ENCODE measurements at regions of chr7 and their contacts with region 1.

Region 1: GRCh38 chr7:25098096-25099046 is 26.7 kb downstream of the CYCS start:
- DNase-seq: no peak
- ATAC-seq: peak; percentile 79
- H3K4me3 ChIP-seq: no peak overlapping the region
- H3K27ac ChIP-seq: no peak overlapping the region
- H3K4me1 ChIP-seq: peaks cover 2% of the 10 kb centered on the region
- H3K27me3 ChIP-seq: no peaks in the 10 kb centered on the region
- CTCF ChIP-seq: peak; percentile 90 to 95 (median 91)
- EP300 ChIP-seq: no peak
- POLR2A ChIP-seq: no peak
- RAD21 ChIP-seq: peak; percentile 90

Region 2: DNA sequence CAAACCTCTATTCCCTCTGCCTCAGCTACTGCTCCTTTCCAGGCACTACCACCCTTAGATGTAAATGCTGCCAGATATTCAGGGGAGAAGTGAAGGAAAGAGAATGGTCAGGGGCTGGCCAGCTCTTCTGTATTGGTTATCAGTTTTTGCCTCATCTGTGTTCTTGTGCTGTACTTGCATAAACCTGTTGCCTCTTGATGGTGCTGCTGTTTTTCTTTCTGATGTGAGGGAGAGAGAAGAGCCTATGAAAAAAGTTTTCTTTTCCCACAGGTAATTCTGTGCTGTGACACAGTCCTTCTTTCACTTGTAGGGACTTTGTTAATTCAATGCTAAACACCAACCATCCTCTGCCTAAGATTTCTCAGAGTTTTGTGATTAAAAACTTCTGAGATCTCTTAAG is 1330.9 kb before region 1 on chr7:
- CTCF ChIA-PET with region 1: no interaction called
- POLR2A ChIA-PET with region 1: no interaction called
- RAD21 ChIA-PET with region 1: no interaction called
- SMC1A ChIA-PET with region 1: no interaction called
- in situ Hi-C with region 1: no loop called
- intact Hi-C with region 1: no loop called
- DNase-seq: no peak
- ATAC-seq: no peak
- H3K4me3 ChIP-seq: no peak overlapping the region
- H3K27ac ChIP-seq: no peak overlapping the region
- H3K4me1 ChIP-seq: no peaks in the 10 kb centered on the region
- H3K27me3 ChIP-seq: no peaks in the 10 kb centered on the region
- CTCF ChIP-seq: no peak
- EP300 ChIP-seq: no peak
- POLR2A ChIP-seq: no peak
- RAD21 ChIP-seq: no peak

Region 3: GRCh38 chr7:25060487-25061055 is 37.8 kb before region 1 on chr7:
- CTCF ChIA-PET with region 1: interaction called, 10 read pairs
- POLR2A ChIA-PET with region 1: no interaction called
- RAD21 ChIA-PET with region 1: interaction called, 4 read pairs
- SMC1A ChIA-PET with region 1: interaction called, 5 read pairs
- in situ Hi-C with region 1: no loop called
- intact Hi-C with region 1: no loop called
- DNase-seq: no peak
- ATAC-seq: no peak
- H3K4me3 ChIP-seq: no peak overlapping the region
- H3K27ac ChIP-seq: no peak overlapping the region
- H3K4me1 ChIP-seq: no peaks in the 10 kb centered on the region
- H3K27me3 ChIP-seq: no peaks in the 10 kb centered on the region; a peak in 1 of 4 replicates
- CTCF ChIP-seq: no peak
- EP300 ChIP-seq: no peak
- POLR2A ChIP-seq: no peak
- RAD21 ChIP-seq: no peak

Region 4: GRCh38 chr7:25117226-25118047 is 19.1 kb after region 1 on chr7:
- CTCF ChIA-PET with region 1: interaction called, 46 read pairs
- POLR2A ChIA-PET with region 1: interaction called, 4 read pairs
- RAD21 ChIA-PET with region 1: interaction called, 9 read pairs
- SMC1A ChIA-PET with region 1: interaction called, 31 read pairs
- in situ Hi-C with region 1: no loop called
- intact Hi-C with region 1: no loop called
- DNase-seq: peak; percentile 91
- ATAC-seq: peak; percentile 87
- H3K4me3 ChIP-seq: peak overlapping the region; percentile 45
- H3K27ac ChIP-seq: peak overlapping the region; percentile 90
- H3K4me1 ChIP-seq: peaks cover 43% of the 10 kb centered on the region
- H3K27me3 ChIP-seq: no peaks in the 10 kb centered on the region
- CTCF ChIP-seq: no peak
- EP300 ChIP-seq: peak; percentile 79 to 92
- POLR2A ChIP-seq: peak; percentile 57; the same call in 1 of the 2 replicates
- RAD21 ChIP-seq: no peak

Region 5: DNA sequence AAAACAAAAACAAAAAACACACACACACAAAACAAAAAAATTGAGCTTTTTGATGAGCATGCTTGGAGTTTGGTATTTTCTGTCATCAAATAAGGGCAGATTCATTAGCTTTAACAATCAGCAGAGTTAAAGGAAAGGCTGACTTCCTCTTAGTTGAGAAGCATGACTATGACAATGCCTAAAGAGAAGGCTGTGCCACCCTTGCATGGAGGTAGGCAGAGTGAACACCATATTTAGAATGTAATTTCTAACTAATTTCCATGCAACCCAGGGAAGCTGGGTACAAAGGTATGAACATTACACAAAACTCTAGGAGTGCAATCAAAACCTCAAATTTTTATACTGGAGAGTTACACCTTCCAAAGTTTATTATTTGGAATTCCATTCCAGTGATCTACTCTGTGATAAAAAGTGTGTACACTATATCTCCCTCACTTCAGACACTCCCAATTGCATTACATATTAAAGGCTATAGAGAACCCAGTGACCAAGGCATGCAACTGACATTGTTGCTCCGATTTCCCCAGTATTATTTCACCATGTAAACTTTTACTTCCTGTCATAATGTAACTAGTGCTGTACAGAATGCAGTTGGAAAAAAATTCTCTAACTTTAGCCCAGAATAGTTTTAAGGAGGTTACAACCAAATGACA is 36.1 kb after region 1 on chr7:
- CTCF ChIA-PET with region 1: interaction called, 14 read pairs
- POLR2A ChIA-PET with region 1: no interaction called
- RAD21 ChIA-PET with region 1: no interaction called
- SMC1A ChIA-PET with region 1: interaction called, 3 read pairs
- in situ Hi-C with region 1: no loop called
- intact Hi-C with region 1: no loop called
- DNase-seq: no peak
- ATAC-seq: no peak
- H3K4me3 ChIP-seq: no peak overlapping the region
- H3K27ac ChIP-seq: no peak overlapping the region
- H3K4me1 ChIP-seq: no peaks in the 10 kb centered on the region
- H3K27me3 ChIP-seq: no peaks in the 10 kb centered on the region
- CTCF ChIP-seq: no peak
- EP300 ChIP-seq: no peak
- POLR2A ChIP-seq: no peak
- RAD21 ChIP-seq: no peak

Region 6: GRCh38 chr7:25149836-25150235 is 51.5 kb after region 1 on chr7:
- CTCF ChIA-PET with region 1: interaction called, 3 read pairs
- POLR2A ChIA-PET with region 1: no interaction called
- RAD21 ChIA-PET with region 1: no interaction called
- SMC1A ChIA-PET with region 1: interaction called, 10 read pairs
- in situ Hi-C with region 1: no loop called
- intact Hi-C with region 1: no loop called
- DNase-seq: no peak
- ATAC-seq: no peak
- H3K4me3 ChIP-seq: no peak overlapping the region
- H3K27ac ChIP-seq: no peak overlapping the region
- H3K4me1 ChIP-seq: no peaks in the 10 kb centered on the region
- H3K27me3 ChIP-seq: no peaks in the 10 kb centered on the region
- CTCF ChIP-seq: no peak
- EP300 ChIP-seq: no peak
- POLR2A ChIP-seq: no peak
- RAD21 ChIP-seq: no peak

Region 7: DNA sequence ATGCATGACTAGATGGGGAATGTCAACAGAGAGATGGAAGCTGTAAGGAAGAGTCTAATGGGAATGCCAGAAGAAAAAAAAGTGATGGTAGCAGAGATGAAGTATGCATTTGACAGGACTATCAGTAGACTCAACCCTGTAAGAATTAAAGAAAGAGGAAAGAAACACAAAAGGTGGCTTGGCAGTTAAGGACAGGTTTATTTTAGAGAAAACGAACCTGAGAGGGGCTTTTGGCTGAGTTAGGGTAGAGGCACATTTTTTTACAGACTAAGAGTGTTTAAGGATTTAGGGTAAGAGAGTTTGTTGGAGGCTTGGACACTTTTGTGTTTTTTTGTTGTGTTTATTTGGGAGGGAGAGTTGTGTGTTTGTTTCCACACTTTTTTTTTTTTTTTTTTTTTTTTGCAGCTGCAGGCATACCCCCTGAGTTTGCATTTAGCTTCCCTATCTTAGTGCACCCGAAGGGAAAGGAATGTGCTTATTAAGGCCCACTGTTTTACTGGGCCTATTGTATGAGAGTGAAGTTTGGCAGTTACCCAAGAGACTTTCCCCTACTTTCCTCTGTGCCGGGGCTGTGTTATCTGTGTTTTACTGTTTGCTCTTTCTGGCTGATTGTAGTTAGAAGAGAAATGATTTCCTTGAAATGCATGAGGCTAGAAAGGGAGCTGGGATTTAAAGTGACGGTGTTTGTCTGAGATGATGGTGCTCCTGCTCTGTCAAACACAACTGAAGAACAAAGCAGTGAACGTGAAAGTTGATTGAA is 97.9 kb after region 1 on chr7:
- CTCF ChIA-PET with region 1: no interaction called
- POLR2A ChIA-PET with region 1: no interaction called
- RAD21 ChIA-PET with region 1: no interaction called
- SMC1A ChIA-PET with region 1: no interaction called
- in situ Hi-C with region 1: no loop called
- intact Hi-C with region 1: no loop called
- DNase-seq: no peak
- ATAC-seq: no peak
- H3K4me3 ChIP-seq: no peak overlapping the region
- H3K27ac ChIP-seq: no peak overlapping the region
- H3K4me1 ChIP-seq: no peaks in the 10 kb centered on the region
- H3K27me3 ChIP-seq: peaks cover 0 to 2% of the 10 kb centered on the region in 2 experiments; a peak in 1 of 4 replicates
- CTCF ChIP-seq: no peak
- EP300 ChIP-seq: no peak
- POLR2A ChIP-seq: no peak
- RAD21 ChIP-seq: no peak

Region 8: DNA sequence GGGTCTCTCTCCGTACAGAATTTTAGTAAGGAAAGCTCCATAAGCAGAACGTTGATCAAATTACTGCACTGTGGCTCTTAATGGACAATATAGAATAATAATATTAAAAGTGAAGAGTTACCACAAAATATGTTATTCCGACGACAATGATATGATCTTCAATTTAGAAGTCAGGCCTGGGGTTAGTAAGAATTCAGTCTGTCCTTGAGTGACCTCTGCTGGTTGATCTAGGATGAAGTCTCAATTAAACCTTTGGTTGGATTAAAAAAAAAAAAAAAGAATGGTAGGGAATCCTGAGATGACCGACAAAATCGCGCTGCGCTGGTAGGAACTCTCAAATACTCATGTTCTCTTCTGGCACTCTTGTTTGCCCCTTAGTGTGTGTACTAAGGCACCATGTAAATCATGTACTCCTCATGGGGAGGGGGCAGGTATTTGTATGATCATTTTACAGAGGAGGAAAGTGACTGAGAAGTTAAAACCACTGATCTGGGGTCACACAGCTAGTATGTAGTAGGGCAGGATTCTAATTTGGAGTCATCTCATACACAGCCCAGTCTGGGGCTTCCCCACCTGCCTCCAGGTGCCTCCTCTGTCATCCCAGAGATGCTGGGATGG is 291.2 kb after region 1 on chr7:
- CTCF ChIA-PET with region 1: no interaction called
- POLR2A ChIA-PET with region 1: no interaction called
- RAD21 ChIA-PET with region 1: no interaction called
- SMC1A ChIA-PET with region 1: no interaction called
- in situ Hi-C with region 1: no loop called
- intact Hi-C with region 1: no loop called
- DNase-seq: peak; percentile 2
- ATAC-seq: 0 out of 3 replicates have a peak, but pooled peaks have one; percentile 23
- H3K4me3 ChIP-seq: no peak overlapping the region
- H3K27ac ChIP-seq: no peak overlapping the region
- H3K4me1 ChIP-seq: no peaks in the 10 kb centered on the region
- H3K27me3 ChIP-seq: peaks cover 0 to 3% of the 10 kb centered on the region in 2 experiments; a peak in 2 of 4 replicates
- CTCF ChIP-seq: peak; percentile 14 to 47 (median 35); a peak in 4 of 6 replicates
- EP300 ChIP-seq: no peak
- POLR2A ChIP-seq: no peak
- RAD21 ChIP-seq: peak; percentile 55

Measured in GM12878 (cell line).